ENCODE measurements at regions of chr11 and their contacts with region 1.

Region 1: DNA sequence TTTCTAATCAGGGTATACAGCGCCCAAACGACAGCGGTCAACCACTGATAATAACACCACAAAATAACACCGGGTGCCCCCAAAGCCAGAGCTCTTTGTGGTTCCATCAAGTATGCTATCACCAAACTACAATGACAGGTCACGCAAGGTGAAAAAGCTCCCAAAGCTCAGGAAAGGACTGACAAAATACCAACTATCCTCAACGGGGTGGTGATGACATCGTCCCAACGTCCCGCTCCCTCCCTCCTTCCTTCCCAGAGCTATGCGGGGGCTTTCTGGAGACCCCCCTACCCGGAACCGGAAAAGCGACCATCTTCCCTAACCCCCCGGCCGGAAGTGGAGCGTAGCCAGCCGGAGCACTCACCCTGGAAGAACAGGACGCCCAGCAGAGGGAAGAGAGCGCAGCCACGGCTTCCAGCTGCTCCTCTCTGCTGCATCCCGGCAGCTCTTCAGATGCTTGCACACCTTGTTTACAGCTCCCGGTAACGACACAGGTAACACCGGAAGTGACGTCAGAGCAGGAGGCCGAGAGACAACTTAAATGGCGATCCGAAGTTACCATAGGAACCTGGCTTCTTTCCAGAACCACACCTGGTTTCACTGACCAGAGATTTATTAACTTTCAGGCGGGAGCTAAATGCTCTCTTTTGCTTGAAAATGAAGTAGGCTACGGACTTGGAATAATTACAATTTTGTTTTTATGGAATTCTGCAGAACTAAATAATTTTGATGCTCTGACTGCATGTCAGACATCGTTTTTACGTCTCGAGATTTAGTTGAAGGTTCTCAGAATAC is at the start of gene MPZL3:
- DNase-seq: peak; percentile 95
- ATAC-seq: peak; percentile 76
- H3K4me3 ChIP-seq: peak within 1 kb of the TSS; percentile 96 to 100 (median 97)
- H3K4me3 Mint-ChIP-seq: peak within 1 kb of the TSS; percentile 98
- H3K27ac ChIP-seq: peak within 1 kb of the TSS; percentile 91 to 97
- H3K27ac Mint-ChIP-seq: peak within 1 kb of the TSS; percentile 99
- H3K4me1 ChIP-seq: peaks cover 6 to 10% of the 10 kb centered on the region in 2 donors
- H3K4me1 Mint-ChIP-seq: peaks cover 13% of the 10 kb centered on the region
- H3K27me3 ChIP-seq: no peaks in the 10 kb centered on the region
- H3K27me3 Mint-ChIP-seq: peaks cover 20% of the 10 kb centered on the region
- CTCF ChIP-seq: no peak
- total RNA-seq, gene MPZL3: 4.2 and 4.9 TPM in 2 replicates

Region 2: DNA sequence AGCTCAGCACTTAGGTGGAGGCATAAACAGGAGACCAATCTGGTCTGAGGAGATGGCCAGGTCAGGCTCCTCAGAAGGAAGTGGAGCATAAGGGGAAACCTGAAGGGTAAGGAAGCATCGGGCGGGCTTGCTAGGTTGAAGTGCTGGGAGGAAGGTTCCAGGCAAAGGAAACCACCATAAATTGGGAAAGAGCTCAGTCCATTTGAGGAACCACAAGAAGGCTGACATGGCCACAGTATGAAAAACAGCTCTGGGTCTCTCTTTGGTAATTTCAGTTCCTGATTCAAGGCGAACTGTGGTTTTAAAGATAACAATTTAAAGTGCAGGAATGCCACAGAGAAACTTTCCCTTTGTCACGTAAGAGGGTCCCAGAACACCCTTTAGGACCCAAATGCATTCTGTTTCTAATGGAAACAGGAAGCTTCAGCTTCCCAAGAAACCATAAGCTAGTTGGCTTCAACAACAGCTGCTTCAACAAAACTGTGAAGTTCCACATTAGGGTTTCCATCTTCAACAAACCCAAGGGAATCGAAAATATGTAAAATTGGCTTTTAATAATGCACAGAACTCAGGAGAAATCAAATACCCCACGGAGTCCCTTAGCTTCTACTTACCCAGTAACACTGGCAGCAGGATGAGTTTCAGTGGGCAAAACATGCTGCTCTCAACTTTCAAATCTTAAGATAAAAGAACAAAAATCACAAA is 37.7 kb before region 1 on chr11:
- CTCF ChIA-PET with region 1: interaction called, 3 read pairs
- POLR2A ChIA-PET with region 1: no interaction called
- intact Hi-C with region 1: loop called (anchors 5 kb)
- DNase-seq: peak; percentile 67
- ATAC-seq: peak; percentile 78
- H3K4me3 ChIP-seq: peak overlapping the region in 3 of 5 experiments; percentile 22 to 34 (median 28)
- H3K4me3 Mint-ChIP-seq: peak overlapping the region; percentile 84
- H3K27ac ChIP-seq: no peak overlapping the region
- H3K27ac Mint-ChIP-seq: peak overlapping the region; percentile 85
- H3K4me1 ChIP-seq: peaks cover 50 to 52% of the 10 kb centered on the region in 2 donors
- H3K4me1 Mint-ChIP-seq: peaks cover 53% of the 10 kb centered on the region
- H3K27me3 ChIP-seq: peaks cover 0 to 16% (median 8%) of the 10 kb centered on the region in 4 experiments
- H3K27me3 Mint-ChIP-seq: peaks cover 42% of the 10 kb centered on the region
- CTCF ChIP-seq: no peak

Region 3: DNA sequence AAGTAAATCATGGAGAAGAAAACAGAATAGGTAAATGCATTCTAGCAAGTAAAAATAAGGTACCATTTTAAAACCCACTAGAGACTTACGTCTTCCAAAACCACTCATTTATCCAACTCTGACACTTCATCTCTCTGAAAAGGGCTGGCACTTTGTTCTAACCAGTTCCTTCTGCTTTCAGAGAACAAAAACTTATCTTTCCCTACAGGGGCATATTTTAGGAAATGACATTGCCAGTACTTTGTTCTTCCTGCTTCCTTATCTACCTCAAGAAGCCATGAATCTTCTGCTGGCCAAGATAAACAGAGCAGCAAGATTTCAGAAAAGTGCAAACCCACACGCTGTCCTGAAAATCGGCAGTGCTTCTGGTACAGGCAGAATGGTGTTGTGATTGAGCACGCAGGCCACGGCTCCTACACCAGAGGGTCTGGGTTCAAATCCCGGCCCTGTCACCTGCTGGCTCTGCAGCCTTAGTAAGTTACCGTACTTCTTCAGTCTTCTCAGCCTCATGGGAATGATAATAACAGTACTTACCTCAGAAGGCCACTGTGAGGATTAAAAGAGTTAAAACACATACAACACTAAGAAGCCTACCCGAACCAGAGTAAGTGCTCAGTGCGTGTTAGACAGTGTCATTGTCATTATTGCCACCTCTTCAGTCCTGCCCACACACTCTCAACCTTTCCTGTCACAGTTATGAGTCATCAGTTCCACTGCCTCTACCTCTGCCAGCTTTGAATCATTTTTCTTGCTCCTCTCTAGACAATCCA is 10.9 kb before region 1 on chr11:
- CTCF ChIA-PET with region 1: no interaction called
- POLR2A ChIA-PET with region 1: no interaction called
- intact Hi-C with region 1: loop called (anchors 1 kb)
- DNase-seq: no peak
- ATAC-seq: peak; percentile 91
- H3K4me3 ChIP-seq: peak overlapping the region in 1 of 5 experiments; percentile 1
- H3K4me3 Mint-ChIP-seq: peak overlapping the region; percentile 5
- H3K27ac ChIP-seq: no peak overlapping the region
- H3K27ac Mint-ChIP-seq: no peak overlapping the region
- H3K4me1 ChIP-seq: peaks cover 15 to 21% of the 10 kb centered on the region in 2 donors
- H3K4me1 Mint-ChIP-seq: peaks cover 39% of the 10 kb centered on the region
- H3K27me3 ChIP-seq: no peaks in the 10 kb centered on the region
- H3K27me3 Mint-ChIP-seq: peaks cover 4% of the 10 kb centered on the region
- CTCF ChIP-seq: no peak

Region 4: DNA sequence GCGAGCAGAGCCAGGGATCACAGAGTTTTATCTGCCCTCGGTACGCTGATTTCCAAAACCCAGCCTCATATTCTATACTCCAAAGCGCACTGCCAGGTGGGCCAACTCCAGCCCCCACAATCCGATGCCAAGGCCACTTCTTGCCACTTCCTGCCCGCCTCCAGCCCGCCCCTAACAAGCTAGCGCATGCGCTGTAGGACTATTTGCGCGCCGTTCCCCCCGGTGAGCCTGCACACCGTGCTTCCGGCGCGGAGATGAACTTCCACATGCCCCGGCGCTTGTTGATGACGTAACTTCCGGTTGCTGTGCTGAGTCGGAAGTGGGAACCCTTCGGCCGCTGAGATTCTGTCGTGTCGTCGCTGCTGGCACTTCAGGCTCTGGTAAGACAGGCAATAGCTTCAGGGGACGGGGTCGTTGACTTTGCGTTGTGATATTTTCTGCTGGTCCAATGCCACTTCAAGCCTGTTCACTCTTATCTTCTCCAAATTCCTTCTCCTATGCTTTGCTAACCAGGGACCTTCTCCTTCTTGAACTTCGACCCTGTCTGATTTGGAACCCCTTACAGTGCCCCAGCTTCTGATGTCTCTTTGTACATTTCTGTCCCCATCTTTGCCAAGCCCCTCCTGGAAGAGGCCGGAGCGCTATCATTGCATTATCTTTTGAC is 107.4 kb after region 1 on chr11 and contains the start of gene UBE4A:
- CTCF ChIA-PET with region 1: no interaction called
- POLR2A ChIA-PET with region 1: no interaction called
- intact Hi-C with region 1: loop called (anchors 1 kb)
- DNase-seq: peak; percentile 97
- ATAC-seq: peak; percentile 91
- H3K4me3 ChIP-seq: peak within 1 kb of the TSS; percentile 82 to 98 (median 92)
- H3K4me3 Mint-ChIP-seq: peak within 1 kb of the TSS; percentile 98
- H3K27ac ChIP-seq: peak within 1 kb of the TSS; percentile 73 to 93
- H3K27ac Mint-ChIP-seq: peak within 1 kb of the TSS; percentile 96
- H3K4me1 ChIP-seq: peaks cover 18 to 23% of the 10 kb centered on the region in 2 donors
- H3K4me1 Mint-ChIP-seq: peaks cover 39% of the 10 kb centered on the region
- H3K27me3 ChIP-seq: no peaks in the 10 kb centered on the region
- H3K27me3 Mint-ChIP-seq: no peaks in the 10 kb centered on the region
- CTCF ChIP-seq: no peak
- total RNA-seq, gene UBE4A: 37.3 and 37.7 TPM in 2 replicates

Measured in B cell (primary cell).